ENCODE measurements at regions of chr16 and their contacts with region 1.

Region 1: GRCh38 chr16:81071816-81072215 is 5.2 kb downstream of the C16orf46 start:
- DNase-seq: peak; percentile 81
- H3K4me3 ChIP-seq: no peak overlapping the region
- H3K27ac ChIP-seq: peak overlapping the region; percentile 19
- H3K4me1 ChIP-seq: peaks cover 12% of the 10 kb centered on the region
- H3K27me3 ChIP-seq: no peaks in the 10 kb centered on the region
- CTCF ChIP-seq: no peak

Region 2: DNA sequence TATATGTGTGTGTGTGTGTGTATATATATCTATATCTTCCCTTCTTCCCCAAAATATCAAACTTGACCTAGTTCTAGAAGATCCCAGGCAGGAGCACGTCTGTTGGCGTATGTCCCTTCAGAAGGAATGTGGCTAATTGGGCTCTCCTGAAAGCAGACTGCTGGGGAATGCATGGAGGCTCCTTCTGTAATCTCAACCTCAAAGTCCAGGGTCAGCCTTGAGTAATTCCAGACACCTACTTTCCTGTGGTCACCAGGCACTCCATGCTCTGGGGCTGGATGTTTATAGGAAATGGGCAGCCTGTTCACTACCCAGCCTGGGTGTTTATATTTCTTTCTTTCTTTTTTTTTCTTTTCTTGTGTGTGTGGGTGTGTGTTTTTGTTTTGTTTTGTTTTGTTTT is 180.1 kb after region 1 on chr16:
- CTCF ChIA-PET with region 1: interaction called, 11 read pairs
- dilution Hi-C with region 1: no loop called
- in situ Hi-C with region 1: no loop called
- intact Hi-C with region 1: no loop called
- DNase-seq: no peak
- H3K4me3 ChIP-seq: no peak overlapping the region
- H3K27ac ChIP-seq: no peak overlapping the region
- H3K4me1 ChIP-seq: no peaks in the 10 kb centered on the region
- H3K27me3 ChIP-seq: no peaks in the 10 kb centered on the region
- CTCF ChIP-seq: no peak

Region 3: DNA sequence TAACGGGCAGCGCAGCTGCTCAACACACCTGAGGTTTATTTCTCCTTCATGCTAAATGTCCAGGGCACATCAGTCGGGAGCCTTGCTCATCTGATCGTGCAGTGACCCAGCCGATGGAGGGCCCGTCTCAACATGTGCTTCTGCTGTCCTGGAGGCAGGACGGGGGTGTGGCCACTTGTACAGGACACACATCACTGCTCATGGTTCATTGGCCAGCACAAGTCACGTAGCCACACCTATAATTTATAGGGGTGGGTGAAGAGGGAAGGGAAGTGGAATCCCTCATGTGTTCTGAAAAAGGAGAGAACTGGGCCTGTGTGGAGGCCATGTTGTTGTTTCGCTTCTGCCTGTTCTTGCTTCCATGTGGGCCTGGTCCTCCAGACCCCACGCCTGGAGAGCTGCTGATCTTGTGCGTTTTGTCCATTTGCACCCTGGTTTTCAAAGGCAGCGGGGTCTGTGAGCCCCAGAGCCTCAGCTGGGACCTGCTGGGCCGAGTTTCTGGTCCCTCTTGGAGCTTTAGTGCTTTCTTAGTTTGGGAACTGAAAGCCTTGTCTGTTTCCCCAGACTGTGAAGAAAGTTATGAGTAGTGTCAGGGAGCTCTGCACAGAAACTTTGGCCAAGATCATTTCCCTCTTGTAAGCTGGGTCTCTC is 433.3 kb after region 1 on chr16:
- CTCF ChIA-PET with region 1: no interaction called
- dilution Hi-C with region 1: no loop called
- in situ Hi-C with region 1: no loop called
- intact Hi-C with region 1: no loop called
- DNase-seq: peak; percentile 86
- H3K4me3 ChIP-seq: no peak overlapping the region
- H3K27ac ChIP-seq: peak overlapping the region; percentile 80
- H3K4me1 ChIP-seq: peaks cover 43% of the 10 kb centered on the region
- H3K27me3 ChIP-seq: no peaks in the 10 kb centered on the region
- CTCF ChIP-seq: no peak

Measured in mammary epithelial cell (primary cell).